Mammary epithelial cell (primary cell): ENCODE measurements at regions of chr6 and their contacts with region 1.

Region 1: GRCh38 chr6:37051138-37052026 is 45.9 kb downstream of the FGD2 start:
- DNase-seq: peak; percentile 65
- H3K4me3 ChIP-seq: no peak overlapping the region
- H3K27ac ChIP-seq: no peak overlapping the region
- H3K4me1 ChIP-seq: peaks cover 36% of the 10 kb centered on the region
- H3K27me3 ChIP-seq: no peaks in the 10 kb centered on the region
- CTCF ChIP-seq: peak; percentile 65 to 96

Region 2: DNA sequence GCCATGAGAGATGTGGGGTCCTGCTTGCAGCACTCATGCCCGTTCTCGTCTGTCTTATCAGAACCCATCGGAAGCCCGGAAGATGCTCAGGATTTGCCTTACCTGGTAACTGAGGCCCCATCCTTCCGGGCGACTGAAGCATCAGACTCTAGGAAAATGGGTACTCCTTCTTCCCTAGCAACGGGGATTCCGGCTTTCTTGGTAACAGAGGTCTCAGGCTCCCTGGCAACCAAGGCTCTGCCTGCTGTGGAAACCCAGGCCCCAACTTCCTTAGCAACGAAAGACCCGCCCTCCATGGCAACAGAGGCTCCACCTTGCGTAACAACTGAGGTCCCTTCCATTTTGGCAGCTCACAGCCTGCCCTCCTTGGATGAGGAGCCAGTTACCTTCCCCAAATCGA is 88.5 kb before region 1 on chr6:
- CTCF ChIA-PET with region 1: no interaction called
- dilution Hi-C with region 1: no loop called
- in situ Hi-C with region 1: no loop called
- intact Hi-C with region 1: no loop called
- DNase-seq: no peak
- H3K4me3 ChIP-seq: no peak overlapping the region
- H3K27ac ChIP-seq: no peak overlapping the region
- H3K4me1 ChIP-seq: peaks cover 3% of the 10 kb centered on the region
- H3K27me3 ChIP-seq: no peaks in the 10 kb centered on the region
- CTCF ChIP-seq: no peak

Region 3: DNA sequence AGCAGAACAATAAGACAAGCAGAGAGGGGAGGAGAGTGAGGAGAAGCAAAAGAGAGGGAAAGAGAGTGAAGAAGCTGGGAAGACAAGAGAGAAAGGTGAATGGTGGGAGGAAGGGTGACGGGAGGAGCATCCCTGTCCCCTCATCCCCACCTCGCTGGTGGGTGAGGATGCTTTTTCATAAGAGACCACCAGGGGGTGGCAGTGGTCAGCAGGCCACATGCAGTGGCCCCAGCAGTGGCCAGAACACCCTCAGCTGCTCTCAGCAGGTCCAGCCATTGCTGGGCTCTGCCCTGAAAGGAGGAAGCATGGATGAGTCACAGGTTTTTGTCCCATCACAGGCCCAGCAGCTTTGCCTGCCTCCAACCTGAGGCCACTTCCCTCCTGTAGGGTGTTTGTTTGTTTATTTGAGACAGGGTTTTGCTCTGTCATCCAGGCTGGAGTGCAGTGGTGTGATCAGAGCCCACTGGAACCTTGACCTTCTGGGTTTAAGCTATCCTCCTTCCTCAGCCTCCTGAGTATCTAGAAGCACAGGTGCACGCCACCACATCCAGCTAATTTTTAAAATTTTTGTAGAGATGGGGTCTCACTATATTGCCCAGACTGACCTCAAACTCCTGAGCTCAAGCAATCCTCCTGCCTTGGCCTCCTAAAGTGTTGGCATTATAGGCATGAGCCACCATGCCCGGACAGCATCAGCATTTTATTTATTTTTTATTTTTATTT is 22.0 kb before region 1 on chr6:
- CTCF ChIA-PET with region 1: no interaction called
- dilution Hi-C with region 1: no loop called
- in situ Hi-C with region 1: loop called in 1 of 2 experiments (anchors 5 kb)
- intact Hi-C with region 1: loop called (anchors 1 kb)
- DNase-seq: peak; percentile 77
- H3K4me3 ChIP-seq: no peak overlapping the region
- H3K27ac ChIP-seq: no peak overlapping the region
- H3K4me1 ChIP-seq: peaks cover 26% of the 10 kb centered on the region
- H3K27me3 ChIP-seq: no peaks in the 10 kb centered on the region
- CTCF ChIP-seq: peak; percentile 28 to 60

Region 4: GRCh38 chr6:37137201-37138090 is 86.1 kb after region 1 on chr6:
- CTCF ChIA-PET with region 1: interaction called, 5 read pairs
- dilution Hi-C with region 1: loop called (anchors 5 kb)
- in situ Hi-C with region 1: loop called in 1 of 2 experiments (anchors 5 kb)
- intact Hi-C with region 1: loop called (anchors 1 kb)
- DNase-seq: peak; percentile 96
- H3K4me3 ChIP-seq: no peak overlapping the region
- H3K27ac ChIP-seq: peak overlapping the region; percentile 86
- H3K4me1 ChIP-seq: peaks cover 44% of the 10 kb centered on the region
- H3K27me3 ChIP-seq: no peaks in the 10 kb centered on the region
- CTCF ChIP-seq: no peak

Region 5: DNA sequence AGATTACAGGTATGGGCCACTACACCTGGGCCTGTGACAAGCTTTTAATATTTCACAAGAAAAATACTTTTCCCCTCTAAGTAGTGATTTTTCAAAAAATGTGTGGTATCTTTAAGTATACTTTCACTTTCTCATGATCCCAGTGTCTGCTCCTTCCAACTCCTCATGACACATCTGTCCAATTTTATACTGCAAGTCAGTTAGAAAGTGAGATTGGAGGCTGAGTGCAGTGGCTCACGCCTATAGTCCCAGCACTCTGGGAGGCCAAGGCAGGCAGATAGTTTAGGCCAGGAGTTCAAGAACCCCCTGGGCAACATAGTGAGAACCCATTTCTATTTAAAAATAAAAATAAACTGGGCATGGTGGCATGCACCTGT is 138.8 kb after region 1 on chr6:
- CTCF ChIA-PET with region 1: interaction called, 15 read pairs
- dilution Hi-C with region 1: no loop called
- in situ Hi-C with region 1: no loop called
- intact Hi-C with region 1: no loop called
- DNase-seq: no peak
- H3K4me3 ChIP-seq: no peak overlapping the region
- H3K27ac ChIP-seq: no peak overlapping the region
- H3K4me1 ChIP-seq: no peaks in the 10 kb centered on the region
- H3K27me3 ChIP-seq: no peaks in the 10 kb centered on the region
- CTCF ChIP-seq: no peak

Region 6: GRCh38 chr6:37207903-37208456 is 156.6 kb after region 1 on chr6:
- CTCF ChIA-PET with region 1: interaction called, 3 read pairs
- dilution Hi-C with region 1: no loop called
- in situ Hi-C with region 1: loop called in 1 of 2 experiments (anchors 10 kb)
- intact Hi-C with region 1: loop called (anchors 1 kb)
- DNase-seq: peak; percentile 77
- H3K4me3 ChIP-seq: no peak overlapping the region
- H3K27ac ChIP-seq: no peak overlapping the region
- H3K4me1 ChIP-seq: peaks cover 7% of the 10 kb centered on the region
- H3K27me3 ChIP-seq: no peaks in the 10 kb centered on the region
- CTCF ChIP-seq: peak; percentile 86 to 91

Region 7: DNA sequence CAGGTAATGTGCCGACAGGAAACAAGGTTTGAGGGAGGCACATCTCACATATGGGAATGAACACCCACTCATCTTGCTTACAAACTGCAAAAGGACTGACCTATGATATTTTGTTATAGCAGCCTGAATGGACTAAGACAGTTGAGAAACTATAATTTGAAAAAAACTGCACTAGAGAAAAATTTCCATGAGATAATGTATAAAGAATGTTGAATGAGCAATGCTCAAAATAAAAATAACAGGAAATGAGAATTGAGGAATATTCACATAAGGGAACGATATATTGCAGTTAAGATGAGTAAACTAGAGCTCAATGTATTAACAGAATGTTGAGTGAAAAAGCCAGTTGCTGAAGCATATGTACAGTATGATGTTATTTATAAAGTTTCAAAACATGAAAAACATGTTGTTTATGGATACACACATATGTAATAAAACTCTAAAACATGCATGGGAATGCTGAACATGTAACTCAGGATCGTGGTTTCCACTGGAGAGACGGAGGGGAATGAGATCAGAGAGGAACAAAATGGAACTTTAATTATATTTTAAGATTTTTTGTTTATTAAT is 199.9 kb after region 1 on chr6:
- CTCF ChIA-PET with region 1: no interaction called
- dilution Hi-C with region 1: no loop called
- in situ Hi-C with region 1: no loop called
- intact Hi-C with region 1: no loop called
- DNase-seq: peak; percentile 38
- H3K4me3 ChIP-seq: no peak overlapping the region
- H3K27ac ChIP-seq: no peak overlapping the region
- H3K4me1 ChIP-seq: peaks cover 7% of the 10 kb centered on the region
- H3K27me3 ChIP-seq: no peaks in the 10 kb centered on the region
- CTCF ChIP-seq: no peak